Dendritic cell treated with granulocyte-macrophage colony-stimulating factor and Interleukin-4, amounts not matched to agents 40 ng/mL and 50 ng/mL, for 4 days (primary cell): ENCODE measurements at regions of chr6 and their contacts with region 1.

Region 1: DNA sequence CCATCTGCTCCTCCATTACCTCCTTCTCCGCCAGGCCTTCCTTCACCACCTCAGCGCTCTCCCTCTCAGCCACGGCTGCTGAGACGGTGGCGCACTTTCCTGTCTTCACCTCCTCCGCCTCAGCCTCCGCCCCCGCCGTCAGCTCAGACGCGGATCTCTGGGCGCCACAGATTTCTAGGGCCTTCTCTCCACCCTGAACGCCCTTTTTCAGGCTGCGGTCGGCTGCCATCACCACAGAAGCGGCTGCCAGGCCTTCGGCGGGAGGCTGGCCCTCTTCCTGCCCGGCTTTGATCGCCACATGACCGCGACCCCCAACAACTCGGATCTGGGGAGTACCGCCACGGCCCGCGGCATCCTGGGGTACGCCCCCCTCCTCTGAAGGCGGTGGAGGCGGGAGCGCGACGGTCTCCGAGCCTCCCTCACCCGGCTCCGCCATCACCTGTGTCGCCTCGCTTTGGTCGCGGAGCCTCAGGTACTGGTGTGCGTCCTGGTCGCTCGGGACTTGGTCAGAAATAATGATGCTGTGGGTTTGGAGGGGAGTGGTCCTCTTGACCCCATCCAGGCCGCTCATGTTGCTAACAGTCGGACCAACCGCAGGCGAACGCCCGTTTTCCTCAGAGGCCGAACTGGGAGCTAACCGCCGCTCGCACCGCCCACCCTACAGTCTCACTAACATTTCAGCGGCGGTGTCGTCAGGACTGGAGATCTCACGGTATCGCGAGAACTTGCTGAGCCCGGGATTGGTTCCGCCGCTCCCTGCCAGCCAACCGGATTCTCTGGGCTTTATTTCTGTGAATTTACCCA is at the start of gene TSPYL1:
- H3K4me3 Mint-ChIP-seq: peak within 1 kb of the TSS; percentile 91
- H3K27ac Mint-ChIP-seq: peak within 1 kb of the TSS; percentile 91
- H3K4me1 Mint-ChIP-seq: peaks cover 48% of the 10 kb centered on the region
- H3K27me3 Mint-ChIP-seq: no peaks in the 10 kb centered on the region

Region 2: DNA sequence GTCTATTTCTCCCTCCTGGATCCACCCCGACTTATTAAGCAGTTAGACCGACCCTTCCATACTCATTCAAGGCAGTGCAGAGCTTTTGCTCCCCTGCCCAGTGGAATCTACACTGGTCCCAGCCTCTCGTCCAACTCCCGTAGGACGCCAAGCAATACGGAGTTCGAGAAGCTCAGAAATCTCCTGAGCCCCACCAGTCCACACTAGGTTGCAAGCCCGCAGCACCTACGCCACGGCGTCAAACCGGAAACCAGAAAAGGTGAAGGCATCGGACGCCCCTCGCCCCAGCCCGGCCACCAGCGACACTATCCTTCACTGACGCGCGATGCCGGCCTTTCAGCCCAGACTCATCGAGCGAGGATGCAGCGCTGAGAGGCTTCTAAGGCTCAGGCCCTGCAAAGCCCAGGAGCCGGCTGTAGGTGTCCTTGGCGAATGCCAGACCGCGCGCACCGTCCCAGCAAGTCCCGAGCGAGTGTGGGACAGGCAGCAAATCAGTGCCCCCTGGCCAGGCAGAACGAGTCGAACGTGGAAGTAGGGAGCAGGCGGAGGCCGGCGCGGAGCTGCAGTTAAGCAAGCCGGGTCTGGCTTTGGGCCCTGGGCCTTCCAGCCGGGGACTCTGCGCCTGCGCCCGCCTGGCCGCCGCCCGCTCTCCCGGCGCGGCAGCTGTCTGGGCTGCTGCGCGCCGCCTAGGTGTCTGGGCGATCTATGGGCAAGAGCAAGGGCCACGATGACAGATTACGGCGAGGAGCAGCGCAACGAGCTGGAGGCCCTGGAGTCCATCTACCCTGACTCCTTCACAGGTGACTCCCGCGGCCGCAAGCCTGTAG is 291.6 kb after region 1 on chr6 and contains the start of gene RWDD1:
- intact Hi-C with region 1: loop called (anchors 2 kb)
- H3K4me3 Mint-ChIP-seq: peak within 1 kb of the TSS; percentile 97
- H3K27ac Mint-ChIP-seq: peak within 1 kb of the TSS; percentile 94
- H3K4me1 Mint-ChIP-seq: peaks cover 45% of the 10 kb centered on the region
- H3K27me3 Mint-ChIP-seq: no peaks in the 10 kb centered on the region